B cell (primary cell): ENCODE measurements at regions of chr9 and their contacts with region 1.

Region 1: DNA sequence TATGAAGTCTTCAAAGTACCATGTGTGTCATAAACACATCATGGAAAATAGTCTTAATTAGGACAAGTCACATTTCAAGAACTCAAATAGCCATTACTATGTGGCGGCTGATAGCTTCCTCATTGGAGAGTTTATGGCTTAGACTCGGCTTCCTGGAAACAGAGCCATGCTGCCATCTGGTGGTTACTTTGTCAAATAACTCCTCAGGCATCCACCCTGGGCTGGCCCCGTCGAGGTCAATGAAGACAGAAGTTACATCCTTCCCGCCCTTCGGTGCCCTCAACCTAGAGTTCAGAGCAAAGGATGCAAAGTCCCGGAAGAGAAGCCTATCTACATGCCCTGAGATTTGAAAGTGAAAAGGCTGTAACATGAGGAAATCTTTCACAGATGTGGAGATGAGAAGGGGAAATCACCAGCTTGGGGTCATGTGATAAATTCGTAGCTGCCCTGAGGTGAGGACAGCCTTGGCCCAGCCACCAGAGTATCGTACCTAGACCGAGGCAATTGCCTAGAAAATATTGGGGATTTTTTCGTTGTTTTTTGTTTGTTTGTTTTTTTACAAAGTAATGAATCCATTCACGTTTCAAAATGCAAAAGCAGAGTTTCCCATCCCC is 45.5 kb upstream of the ZNF169 start:
- DNase-seq: peak; percentile 87
- ATAC-seq: peak; percentile 97
- H3K4me3 ChIP-seq: no peak overlapping the region
- H3K4me3 Mint-ChIP-seq: peak overlapping the region; percentile 5
- H3K27ac ChIP-seq: no peak overlapping the region
- H3K27ac Mint-ChIP-seq: no peak overlapping the region
- H3K4me1 ChIP-seq: peaks cover 3 to 4% of the 10 kb centered on the region in 2 donors
- H3K4me1 Mint-ChIP-seq: peaks cover 4% of the 10 kb centered on the region
- H3K27me3 ChIP-seq: peaks cover 0 to 3% (median 0%) of the 10 kb centered on the region in 4 experiments
- H3K27me3 Mint-ChIP-seq: peaks cover 16% of the 10 kb centered on the region
- CTCF ChIP-seq: peak; percentile 89

Region 2: GRCh38 chr9:93159601-93160471 is 1053.8 kb before region 1 on chr9:
- CTCF ChIA-PET with region 1: interaction called, 3 read pairs
- POLR2A ChIA-PET with region 1: no interaction called
- intact Hi-C with region 1: loop called (anchors 5 kb)
- DNase-seq: peak; percentile 78
- ATAC-seq: peak; percentile 98
- H3K4me3 ChIP-seq: no peak overlapping the region
- H3K4me3 Mint-ChIP-seq: no peak overlapping the region
- H3K27ac ChIP-seq: no peak overlapping the region
- H3K27ac Mint-ChIP-seq: no peak overlapping the region
- H3K4me1 ChIP-seq: peaks cover 4 to 6% of the 10 kb centered on the region in 2 donors
- H3K4me1 Mint-ChIP-seq: peaks cover 4% of the 10 kb centered on the region
- H3K27me3 ChIP-seq: peaks cover 0 to 3% (median 0%) of the 10 kb centered on the region in 4 experiments
- H3K27me3 Mint-ChIP-seq: no peaks in the 10 kb centered on the region
- CTCF ChIP-seq: peak; percentile 97

Region 3: GRCh38 chr9:93427655-93428379 is 785.8 kb before region 1 on chr9:
- CTCF ChIA-PET with region 1: no interaction called
- POLR2A ChIA-PET with region 1: no interaction called
- intact Hi-C with region 1: no loop called
- DNase-seq: no peak
- ATAC-seq: no peak
- H3K4me3 ChIP-seq: no peak overlapping the region
- H3K4me3 Mint-ChIP-seq: no peak overlapping the region
- H3K27ac ChIP-seq: no peak overlapping the region
- H3K27ac Mint-ChIP-seq: no peak overlapping the region
- H3K4me1 ChIP-seq: no peaks in the 10 kb centered on the region
- H3K4me1 Mint-ChIP-seq: no peaks in the 10 kb centered on the region
- H3K27me3 ChIP-seq: peaks cover 0 to 5% (median 4%) of the 10 kb centered on the region in 4 experiments
- H3K27me3 Mint-ChIP-seq: peaks cover 37% of the 10 kb centered on the region
- CTCF ChIP-seq: no peak

Region 4: GRCh38 chr9:93682232-93682968 is 531.2 kb before region 1 on chr9:
- CTCF ChIA-PET with region 1: interaction called, 8 read pairs
- POLR2A ChIA-PET with region 1: no interaction called
- intact Hi-C with region 1: loop called (anchors 5 kb)
- DNase-seq: peak; percentile 59
- ATAC-seq: peak; percentile 41
- H3K4me3 ChIP-seq: no peak overlapping the region
- H3K4me3 Mint-ChIP-seq: no peak overlapping the region
- H3K27ac ChIP-seq: no peak overlapping the region
- H3K27ac Mint-ChIP-seq: no peak overlapping the region
- H3K4me1 ChIP-seq: no peaks in the 10 kb centered on the region
- H3K4me1 Mint-ChIP-seq: no peaks in the 10 kb centered on the region
- H3K27me3 ChIP-seq: peaks cover 0 to 8% (median 0%) of the 10 kb centered on the region in 4 experiments
- H3K27me3 Mint-ChIP-seq: peaks cover 16% of the 10 kb centered on the region
- CTCF ChIP-seq: peak; percentile 80

Region 5: DNA sequence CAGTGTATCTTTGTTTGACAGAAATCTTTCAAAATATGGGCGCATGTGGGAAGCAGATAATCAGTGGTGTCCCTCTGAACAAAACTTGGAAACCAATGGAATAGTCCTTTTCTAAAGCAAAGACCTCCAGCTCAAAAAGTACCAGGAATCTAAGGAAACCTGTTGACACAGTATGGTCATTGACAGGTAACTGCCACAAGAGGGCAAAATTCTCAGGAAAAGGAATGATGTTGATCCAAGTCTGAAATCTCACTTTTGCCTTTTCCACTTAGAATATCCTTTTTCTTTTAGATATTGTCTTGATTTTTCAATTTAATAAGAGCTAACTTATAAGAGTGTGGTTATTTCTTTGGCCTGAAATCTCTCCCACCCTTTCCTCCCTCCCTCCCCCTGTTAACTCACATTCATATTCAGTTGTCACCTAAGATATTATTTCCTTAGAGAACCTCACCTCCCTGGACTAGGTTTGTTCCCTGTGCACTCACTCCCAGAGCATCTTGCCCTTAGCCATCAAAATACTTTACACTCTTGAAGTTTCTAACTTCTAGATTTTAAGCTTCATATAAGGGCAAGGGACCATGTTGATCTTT is 199.5 kb before region 1 on chr9:
- CTCF ChIA-PET with region 1: interaction called, 76 read pairs
- POLR2A ChIA-PET with region 1: no interaction called
- intact Hi-C with region 1: loop called (anchors 1 kb)
- DNase-seq: peak; percentile 24
- ATAC-seq: no peak
- H3K4me3 ChIP-seq: no peak overlapping the region
- H3K4me3 Mint-ChIP-seq: no peak overlapping the region
- H3K27ac ChIP-seq: no peak overlapping the region
- H3K27ac Mint-ChIP-seq: no peak overlapping the region
- H3K4me1 ChIP-seq: peaks cover 5 to 6% of the 10 kb centered on the region in 2 donors
- H3K4me1 Mint-ChIP-seq: peaks cover 5% of the 10 kb centered on the region
- H3K27me3 ChIP-seq: peaks cover 0 to 2% (median 0%) of the 10 kb centered on the region in 4 experiments
- H3K27me3 Mint-ChIP-seq: peaks cover 4% of the 10 kb centered on the region
- CTCF ChIP-seq: peak; percentile 70

Region 6: GRCh38 chr9:94056442-94056974 is 157.1 kb before region 1 on chr9:
- CTCF ChIA-PET with region 1: interaction called, 409 read pairs
- POLR2A ChIA-PET with region 1: no interaction called
- intact Hi-C with region 1: no loop called
- DNase-seq: no peak
- ATAC-seq: no peak
- H3K4me3 ChIP-seq: no peak overlapping the region
- H3K4me3 Mint-ChIP-seq: no peak overlapping the region
- H3K27ac ChIP-seq: no peak overlapping the region
- H3K27ac Mint-ChIP-seq: no peak overlapping the region
- H3K4me1 ChIP-seq: no peaks in the 10 kb centered on the region
- H3K4me1 Mint-ChIP-seq: no peaks in the 10 kb centered on the region
- H3K27me3 ChIP-seq: no peaks in the 10 kb centered on the region
- H3K27me3 Mint-ChIP-seq: no peaks in the 10 kb centered on the region
- CTCF ChIP-seq: no peak

Region 7: DNA sequence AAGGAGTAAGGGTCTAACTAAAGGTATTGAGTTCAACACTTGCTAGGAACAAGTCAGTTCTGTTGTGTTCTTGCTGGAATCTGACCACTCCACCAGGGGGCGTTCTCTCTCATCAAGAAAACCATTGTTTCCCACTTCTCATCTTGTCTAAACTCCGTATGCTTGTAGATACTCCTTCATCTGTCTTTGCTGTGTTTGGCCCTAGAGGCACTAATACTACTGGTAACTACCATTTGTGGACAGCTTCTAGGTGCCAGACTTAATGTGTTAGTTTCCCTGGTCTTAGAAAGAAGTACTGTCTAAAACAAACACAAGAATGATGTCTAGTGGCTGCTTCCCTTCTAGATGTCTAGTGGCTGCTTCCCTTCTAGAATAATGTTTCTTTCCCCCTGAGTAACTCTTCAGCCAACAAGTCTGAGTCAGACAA is 148.1 kb before region 1 on chr9:
- CTCF ChIA-PET with region 1: interaction called, 409 read pairs
- POLR2A ChIA-PET with region 1: interaction called, 3 read pairs
- intact Hi-C with region 1: loop called (anchors 1 kb)
- DNase-seq: peak; percentile 80
- ATAC-seq: peak; percentile 53
- H3K4me3 ChIP-seq: no peak overlapping the region
- H3K4me3 Mint-ChIP-seq: no peak overlapping the region
- H3K27ac ChIP-seq: no peak overlapping the region
- H3K27ac Mint-ChIP-seq: no peak overlapping the region
- H3K4me1 ChIP-seq: peaks cover 4 to 5% of the 10 kb centered on the region in 2 donors
- H3K4me1 Mint-ChIP-seq: peaks cover 6% of the 10 kb centered on the region
- H3K27me3 ChIP-seq: no peaks in the 10 kb centered on the region
- H3K27me3 Mint-ChIP-seq: no peaks in the 10 kb centered on the region
- CTCF ChIP-seq: peak; percentile 90

Region 8: GRCh38 chr9:94166237-94166963 is 47.2 kb before region 1 on chr9:
- CTCF ChIA-PET with region 1: interaction called, 9 read pairs
- POLR2A ChIA-PET with region 1: interaction called, 3 read pairs
- intact Hi-C with region 1: loop called (anchors 1 kb)
- DNase-seq: peak; percentile 96
- ATAC-seq: peak; percentile 56
- H3K4me3 ChIP-seq: peak overlapping the region in 4 of 5 experiments; percentile 75 to 86 (median 80)
- H3K4me3 Mint-ChIP-seq: peak overlapping the region; percentile 92
- H3K27ac ChIP-seq: peak overlapping the region; percentile 86 to 99
- H3K27ac Mint-ChIP-seq: peak overlapping the region; percentile 95
- H3K4me1 ChIP-seq: peaks cover 36 to 46% of the 10 kb centered on the region in 2 donors
- H3K4me1 Mint-ChIP-seq: peaks cover 49% of the 10 kb centered on the region
- H3K27me3 ChIP-seq: no peaks in the 10 kb centered on the region
- H3K27me3 Mint-ChIP-seq: no peaks in the 10 kb centered on the region
- CTCF ChIP-seq: no peak

Region 9: DNA sequence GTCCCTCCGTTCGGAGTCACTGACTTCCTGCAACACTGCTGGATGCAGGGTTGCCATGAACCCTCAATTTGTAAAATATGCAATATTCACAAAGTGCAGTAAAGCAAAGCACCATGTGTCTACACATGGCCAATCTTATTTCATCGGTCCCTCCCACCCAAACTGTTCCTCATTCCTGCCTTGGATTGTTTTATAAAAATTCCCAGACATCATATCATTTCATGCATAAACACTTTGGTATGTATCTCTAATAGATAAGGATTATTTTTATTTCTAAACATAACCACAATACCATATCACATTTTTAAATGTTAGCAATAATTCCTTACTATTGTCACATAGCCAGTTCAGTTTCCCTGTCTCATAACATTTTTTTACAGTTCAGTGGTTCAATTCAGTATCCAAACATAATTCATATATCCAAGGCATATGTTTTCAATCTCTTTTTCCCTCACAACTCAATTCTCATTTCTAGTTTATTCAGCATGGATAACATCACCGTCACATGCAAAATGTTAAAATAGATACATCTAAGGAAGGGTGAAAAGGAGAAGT is 259.3 kb after region 1 on chr9:
- CTCF ChIA-PET with region 1: no interaction called
- POLR2A ChIA-PET with region 1: no interaction called
- intact Hi-C with region 1: no loop called
- DNase-seq: no peak
- ATAC-seq: no peak
- H3K4me3 ChIP-seq: no peak overlapping the region
- H3K4me3 Mint-ChIP-seq: no peak overlapping the region
- H3K27ac ChIP-seq: no peak overlapping the region
- H3K27ac Mint-ChIP-seq: no peak overlapping the region
- H3K4me1 ChIP-seq: no peaks in the 10 kb centered on the region
- H3K4me1 Mint-ChIP-seq: no peaks in the 10 kb centered on the region
- H3K27me3 ChIP-seq: peaks cover 0 to 4% (median 0%) of the 10 kb centered on the region in 4 experiments
- H3K27me3 Mint-ChIP-seq: peaks cover 3% of the 10 kb centered on the region
- CTCF ChIP-seq: no peak